GM18951 (cell line): ENCODE measurements at regions of chr12 and their contacts with region 1.

Region 1: GRCh38 chr12:77031745-77032144 is 33.6 kb downstream of the E2F7 start:
- POLR2A ChIP-seq: no peak

Region 2: DNA sequence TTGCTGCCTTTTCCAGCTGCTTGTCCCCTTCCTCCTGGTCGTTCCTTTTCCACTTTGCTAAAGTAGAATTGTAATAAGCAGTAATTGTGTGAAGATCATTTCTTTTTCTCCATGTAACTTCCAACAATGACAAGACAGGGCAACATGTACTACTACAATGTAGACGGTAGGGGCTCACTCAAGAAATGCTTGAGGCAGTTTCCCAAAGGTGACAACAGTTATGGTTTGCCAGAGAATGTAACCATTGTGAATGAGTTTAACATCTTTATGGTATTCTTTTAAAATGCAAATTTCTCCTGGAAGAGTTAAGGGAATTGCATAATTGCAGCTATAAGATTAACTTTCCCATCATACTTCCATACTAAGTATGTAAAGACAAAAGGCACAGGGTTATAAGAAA is 976.4 kb before region 1 on chr12:
- in situ Hi-C with region 1: no loop called
- POLR2A ChIP-seq: no peak

Region 3: GRCh38 chr12:76936275-76937185 is 95.2 kb before region 1 on chr12:
- in situ Hi-C with region 1: no loop called
- POLR2A ChIP-seq: no peak

Region 4: DNA sequence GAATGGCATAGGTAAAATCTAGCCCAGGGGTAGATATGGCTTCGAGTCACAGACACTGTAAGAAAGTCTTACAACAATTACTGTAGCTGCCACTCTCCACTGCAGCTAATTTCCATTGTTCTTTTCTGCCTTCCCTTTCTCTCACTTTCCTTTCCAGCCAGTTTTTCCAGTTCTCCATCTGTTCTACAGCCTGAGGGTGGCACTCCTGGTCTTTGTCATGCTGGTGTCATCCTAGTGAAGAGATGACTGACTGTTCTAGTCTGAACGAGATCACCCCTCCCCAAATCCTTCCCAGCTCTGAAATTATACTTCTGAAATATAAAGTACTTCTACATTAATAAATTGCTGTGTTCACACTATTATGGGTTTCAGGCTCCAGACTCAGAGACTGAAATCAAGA is 78.8 kb before region 1 on chr12:
- in situ Hi-C with region 1: no loop called
- POLR2A ChIP-seq: no peak

Region 5: DNA sequence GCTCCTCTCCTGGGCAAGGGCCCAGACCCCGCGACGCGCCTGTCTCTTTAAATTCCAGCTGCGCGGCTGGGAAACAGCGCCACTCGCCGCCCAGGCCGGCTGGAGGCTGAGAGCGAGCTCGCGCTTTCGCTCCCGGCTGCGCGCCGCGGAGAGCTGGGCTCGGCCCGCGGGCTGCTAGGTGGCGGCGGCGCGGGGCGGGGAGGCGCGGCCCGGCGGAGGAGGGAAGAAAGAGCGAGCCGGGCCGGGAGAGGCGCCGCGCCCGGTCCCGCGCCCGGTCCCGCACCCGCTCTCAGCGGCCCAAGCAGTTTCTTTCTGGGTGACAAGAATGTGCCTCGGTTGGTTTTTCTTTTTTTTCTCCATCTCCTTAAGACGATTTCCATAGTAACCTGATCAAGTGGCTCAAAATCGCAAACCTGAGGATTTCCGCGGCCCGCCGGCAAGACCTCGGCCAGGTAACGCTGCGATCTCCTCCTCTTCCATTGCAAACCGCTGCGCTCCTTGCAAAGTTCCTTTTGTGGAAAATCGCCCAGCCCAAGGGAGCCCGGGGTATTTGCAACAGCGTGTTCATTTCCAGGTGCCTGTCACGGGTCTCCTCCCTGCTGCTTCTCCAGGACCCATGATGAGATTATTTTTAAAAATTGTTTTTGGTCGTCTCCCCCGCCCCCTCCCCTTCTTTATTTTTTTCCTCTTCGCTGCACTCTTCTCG is 293.2 kb after region 1 on chr12:
- in situ Hi-C with region 1: loop called (anchors 10 kb)
- POLR2A ChIP-seq: no peak